ENCODE measurements at regions of chrX and their contacts with region 1.

Region 1: GRCh38 chrX:1618689-1619088 is 3.8 kb downstream of the ASMT start:
- DNase-seq: no peak
- ATAC-seq: no peak
- H3K4me3 ChIP-seq: no peak overlapping the region
- H3K4me3 Mint-ChIP-seq: no peak overlapping the region
- H3K27ac ChIP-seq: no peak overlapping the region
- H3K27ac Mint-ChIP-seq: no peak overlapping the region
- H3K4me1 ChIP-seq: peaks cover 9% of the 10 kb centered on the region
- H3K4me1 Mint-ChIP-seq: peaks cover 9% of the 10 kb centered on the region
- H3K27me3 ChIP-seq: no peaks in the 10 kb centered on the region
- H3K27me3 Mint-ChIP-seq: no peaks in the 10 kb centered on the region
- CTCF ChIP-seq: no peak

Region 2: GRCh38 chrX:1354036-1355019 is 264.4 kb before region 1 on chrX:
- CTCF ChIA-PET with region 1: no interaction called
- POLR2A ChIA-PET with region 1: no interaction called
- intact Hi-C with region 1: loop called in 1 of 2 experiments (anchors 5 kb)
- DNase-seq: no peak
- ATAC-seq: no peak
- H3K4me3 ChIP-seq: no peak overlapping the region
- H3K4me3 Mint-ChIP-seq: no peak overlapping the region
- H3K27ac ChIP-seq: no peak overlapping the region
- H3K27ac Mint-ChIP-seq: no peak overlapping the region
- H3K4me1 ChIP-seq: no peaks in the 10 kb centered on the region
- H3K4me1 Mint-ChIP-seq: peaks cover 6% of the 10 kb centered on the region
- H3K27me3 ChIP-seq: no peaks in the 10 kb centered on the region
- H3K27me3 Mint-ChIP-seq: no peaks in the 10 kb centered on the region
- CTCF ChIP-seq: no peak

Measured in CD8-positive, alpha-beta T cell (primary cell).